ENCODE measurements at regions of chr7 and their contacts with region 1.

Region 1: GRCh38 chr7:24290004-24290641 is 6.1 kb downstream of the NPY start:
- DNase-seq: peak; percentile 35
- H3K4me3 Mint-ChIP-seq: no peak overlapping the region
- H3K27ac Mint-ChIP-seq: no peak overlapping the region
- H3K4me1 Mint-ChIP-seq: peaks cover 8% of the 10 kb centered on the region
- H3K27me3 Mint-ChIP-seq: peaks cover 35% of the 10 kb centered on the region

Region 2: DNA sequence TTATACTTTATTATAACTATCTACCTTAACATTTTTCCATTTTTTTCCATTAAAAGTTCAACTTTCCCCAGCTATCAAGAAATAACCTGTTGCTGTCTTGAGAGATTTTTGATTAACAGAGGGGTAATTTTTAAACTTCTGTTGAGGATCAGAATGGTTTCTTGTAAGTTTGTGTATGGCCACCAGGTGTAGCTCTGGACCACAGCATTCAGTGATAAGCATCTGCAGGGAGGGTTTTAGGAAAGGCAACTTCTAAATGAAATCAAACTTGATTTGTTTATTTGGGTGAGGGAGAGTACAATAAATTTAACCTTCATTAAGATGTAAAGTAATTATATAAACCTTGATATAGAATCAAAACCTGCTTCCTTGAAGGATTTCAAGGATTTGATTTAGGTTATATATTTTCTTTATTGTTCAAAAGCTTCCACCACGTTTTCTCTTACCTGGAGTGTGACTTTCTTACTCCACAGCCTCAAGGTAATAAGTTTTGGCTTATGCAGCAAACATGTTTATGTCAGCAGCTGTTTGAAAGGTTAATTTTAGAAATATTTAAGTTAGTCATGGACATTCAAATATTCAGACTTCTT is 426.8 kb before region 1 on chr7:
- intact Hi-C with region 1: loop called (anchors 5 kb)
- DNase-seq: no peak
- H3K4me3 Mint-ChIP-seq: no peak overlapping the region
- H3K27ac Mint-ChIP-seq: no peak overlapping the region
- H3K4me1 Mint-ChIP-seq: no peaks in the 10 kb centered on the region
- H3K27me3 Mint-ChIP-seq: peaks cover 9% of the 10 kb centered on the region

Region 3: DNA sequence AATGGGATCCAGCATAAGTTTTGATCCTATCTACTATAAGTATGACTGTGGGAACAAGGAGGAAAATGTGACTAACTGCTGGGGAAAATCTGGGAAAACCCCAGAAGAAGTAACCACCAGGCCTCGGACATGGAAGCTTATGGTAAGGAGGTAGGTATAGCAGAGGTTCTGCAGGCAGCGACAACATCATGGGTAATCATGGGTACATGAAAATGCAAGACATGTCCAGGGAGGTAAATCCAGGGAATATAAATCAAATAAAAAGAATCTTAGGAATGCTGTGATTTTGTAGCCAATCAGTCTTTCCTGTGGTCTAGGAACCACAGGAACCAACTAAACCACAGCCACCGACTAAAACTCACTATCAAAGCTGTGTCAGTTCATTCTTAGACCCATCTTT is 174.5 kb before region 1 on chr7:
- intact Hi-C with region 1: no loop called
- DNase-seq: no peak
- H3K4me3 Mint-ChIP-seq: no peak overlapping the region
- H3K27ac Mint-ChIP-seq: no peak overlapping the region
- H3K4me1 Mint-ChIP-seq: no peaks in the 10 kb centered on the region
- H3K27me3 Mint-ChIP-seq: no peaks in the 10 kb centered on the region

Region 4: GRCh38 chr7:24381894-24382505 is 91.9 kb after region 1 on chr7:
- intact Hi-C with region 1: loop called (anchors 1 kb)
- DNase-seq: no peak
- H3K4me3 Mint-ChIP-seq: no peak overlapping the region
- H3K27ac Mint-ChIP-seq: no peak overlapping the region
- H3K4me1 Mint-ChIP-seq: no peaks in the 10 kb centered on the region
- H3K27me3 Mint-ChIP-seq: no peaks in the 10 kb centered on the region

Region 5: GRCh38 chr7:24572997-24573625 is 283.0 kb after region 1 on chr7 and contains the start of gene PALS2:
- intact Hi-C with region 1: loop called (anchors 1 kb)
- DNase-seq: peak; percentile 77
- H3K4me3 Mint-ChIP-seq: peak within 1 kb of the TSS; percentile 94
- H3K27ac Mint-ChIP-seq: peak within 1 kb of the TSS; percentile 84
- H3K4me1 Mint-ChIP-seq: peaks cover 29% of the 10 kb centered on the region
- H3K27me3 Mint-ChIP-seq: peaks cover 41% of the 10 kb centered on the region
- total RNA-seq, gene PALS2: 34.9 and 42.2 TPM in 2 replicates

Region 6: DNA sequence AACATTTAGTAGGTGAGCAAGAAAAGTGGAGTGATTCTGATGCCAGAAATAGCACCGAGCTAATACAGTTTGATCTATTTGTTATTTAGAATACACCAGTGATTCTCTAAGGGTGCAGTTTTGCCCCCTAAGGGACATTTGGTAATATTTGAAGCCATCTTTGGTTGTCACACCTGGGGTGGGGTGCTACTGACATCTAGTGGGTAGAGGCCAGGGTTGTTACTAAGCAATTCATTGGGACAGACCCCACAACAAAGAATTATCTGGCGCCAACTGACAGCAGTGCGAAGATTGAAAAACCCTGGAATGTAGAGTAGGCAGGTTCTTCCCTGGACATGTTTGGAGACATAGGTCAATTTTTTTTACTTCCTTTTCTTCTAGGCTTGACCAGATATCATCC is 297.7 kb after region 1 on chr7:
- intact Hi-C with region 1: loop called (anchors 5 kb)
- DNase-seq: no peak
- H3K4me3 Mint-ChIP-seq: no peak overlapping the region
- H3K27ac Mint-ChIP-seq: no peak overlapping the region
- H3K4me1 Mint-ChIP-seq: peaks cover 23% of the 10 kb centered on the region
- H3K27me3 Mint-ChIP-seq: peaks cover 1% of the 10 kb centered on the region

Region 7: DNA sequence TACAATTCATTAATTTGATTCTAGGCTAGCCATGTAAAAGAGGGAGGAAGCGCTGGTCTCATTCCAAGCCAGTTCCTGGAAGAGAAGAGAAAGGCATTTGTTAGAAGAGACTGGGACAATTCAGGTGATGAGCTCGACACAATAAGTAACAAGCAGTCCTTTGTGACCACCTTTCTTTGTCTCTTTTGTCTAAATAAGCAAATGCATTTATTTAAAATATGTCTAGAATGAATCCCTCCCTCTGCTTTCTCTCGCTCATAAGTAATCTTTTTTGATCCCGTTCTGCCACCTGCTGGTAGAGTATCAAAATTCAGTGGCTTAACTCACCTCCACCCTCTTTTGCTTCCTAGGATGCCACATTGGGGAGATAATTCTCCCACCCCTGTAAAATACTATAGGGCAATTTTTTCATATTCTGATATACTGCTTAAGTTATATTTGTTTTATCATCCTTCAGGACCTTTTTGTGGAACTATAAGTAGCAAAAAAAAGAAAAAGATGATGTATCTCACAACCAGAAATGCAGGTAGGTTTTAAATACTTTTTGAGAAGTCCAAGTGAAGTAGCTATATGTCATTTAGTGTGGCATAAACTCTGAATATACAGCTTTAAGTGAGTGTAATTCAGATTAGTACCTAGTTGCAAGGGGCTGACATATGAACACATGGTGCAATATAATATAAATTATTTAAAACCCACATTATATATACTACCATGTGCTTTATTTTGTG is 375.6 kb after region 1 on chr7:
- intact Hi-C with region 1: loop called (anchors 1 kb)
- DNase-seq: peak; percentile 14
- H3K4me3 Mint-ChIP-seq: no peak overlapping the region
- H3K27ac Mint-ChIP-seq: no peak overlapping the region
- H3K4me1 Mint-ChIP-seq: no peaks in the 10 kb centered on the region
- H3K27me3 Mint-ChIP-seq: no peaks in the 10 kb centered on the region

Region 8: GRCh38 chr7:25098096-25099046 is 808.2 kb after region 1 on chr7:
- intact Hi-C with region 1: loop called (anchors 1 kb)
- DNase-seq: peak; percentile 48
- H3K4me3 Mint-ChIP-seq: no peak overlapping the region
- H3K27ac Mint-ChIP-seq: no peak overlapping the region
- H3K4me1 Mint-ChIP-seq: peaks cover 14% of the 10 kb centered on the region
- H3K27me3 Mint-ChIP-seq: peaks cover 17% of the 10 kb centered on the region

Region 9: DNA sequence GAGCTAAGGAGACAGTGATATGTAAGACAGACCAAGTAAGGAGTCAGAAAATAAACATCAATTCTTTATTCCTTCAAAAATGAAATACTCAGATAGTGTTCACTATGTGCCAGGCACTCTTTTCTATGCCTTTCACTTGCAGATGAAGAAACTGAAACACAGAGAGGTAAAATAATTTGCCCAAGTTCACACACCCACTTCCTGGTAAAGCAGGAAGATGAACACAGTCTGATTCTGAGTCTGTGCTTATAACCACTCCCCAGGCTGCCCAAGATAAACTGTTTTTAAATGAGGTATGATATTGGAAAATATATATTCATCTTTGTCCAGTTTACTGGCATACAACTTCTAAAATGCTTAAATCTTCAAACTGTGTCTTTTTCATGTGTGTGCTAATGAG is 1232.6 kb after region 1 on chr7:
- intact Hi-C with region 1: no loop called
- DNase-seq: no peak
- H3K4me3 Mint-ChIP-seq: no peak overlapping the region
- H3K27ac Mint-ChIP-seq: no peak overlapping the region
- H3K4me1 Mint-ChIP-seq: peaks cover 39% of the 10 kb centered on the region
- H3K27me3 Mint-ChIP-seq: peaks cover 12% of the 10 kb centered on the region